ENCODE measurements at regions of chr12 and their contacts with region 1.

Region 1: DNA sequence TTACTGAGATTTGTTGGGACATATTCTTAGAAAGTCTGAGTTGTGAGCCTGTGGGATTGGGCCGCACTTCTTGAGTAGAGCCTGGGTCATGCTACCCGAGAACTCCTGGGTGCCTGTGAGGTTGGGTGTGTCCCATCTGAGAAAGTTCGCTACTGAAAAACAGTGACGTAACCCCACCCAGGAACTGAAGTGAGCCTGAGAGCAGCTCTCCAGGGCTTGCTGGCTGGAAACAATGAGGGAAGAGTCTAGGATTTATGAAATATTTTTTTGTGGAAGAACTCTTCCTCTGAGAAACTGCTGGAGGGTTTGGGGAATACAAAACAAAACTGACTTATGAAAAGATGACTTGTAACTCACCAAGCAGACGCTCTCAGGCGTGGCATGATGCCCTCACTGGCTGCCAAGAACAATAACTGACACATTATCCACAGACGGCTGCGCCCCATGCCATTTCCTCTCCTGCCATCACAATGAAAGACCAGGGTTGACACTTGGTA is 69.2 kb downstream of the RASSF3 start:
- DNase-seq: peak; percentile 78
- ATAC-seq: peak; percentile 68
- H3K4me3 Mint-ChIP-seq: peak overlapping the region; percentile 66
- H3K27ac Mint-ChIP-seq: peak overlapping the region; percentile 97
- H3K4me1 Mint-ChIP-seq: peaks cover 93% of the 10 kb centered on the region
- H3K27me3 Mint-ChIP-seq: no peaks in the 10 kb centered on the region

Region 2: GRCh38 chr12:64610149-64610678 is 69.3 kb before region 1 on chr12 and contains the start of gene RASSF3:
- CTCF ChIA-PET with region 1: interaction called, 36 read pairs
- DNase-seq: peak; percentile 88
- ATAC-seq: peak; percentile 71
- H3K4me3 Mint-ChIP-seq: peak within 1 kb of the TSS; percentile 84
- H3K27ac Mint-ChIP-seq: peak within 1 kb of the TSS; percentile 96
- H3K4me1 Mint-ChIP-seq: peaks cover 39% of the 10 kb centered on the region
- H3K27me3 Mint-ChIP-seq: no peaks in the 10 kb centered on the region
- total RNA-seq, gene RASSF3: 45.5 to 61.5 TPM

Measured in activated CD8-positive, alpha-beta memory T cell treated with anti-CD3 and anti-CD28 coated beads, Interleukin-2, amount 10 ng/mL, durations not matched to agents 7 days and 5 days (primary cell).